ENCODE measurements at regions of chr22 and their contacts with region 1.

Region 1: GRCh38 chr22:39773976-39774539 is 119.5 kb downstream of the ENTHD1 start:
- DNase-seq: peak in 8 of 9 donors; percentile 16 to 51 (median 40)
- ATAC-seq: peak; percentile 88
- H3K4me3 ChIP-seq: no peak overlapping the region
- H3K4me3 Mint-ChIP-seq: peak overlapping the region; percentile 3 to 75 (median 62)
- H3K27ac ChIP-seq: no peak overlapping the region
- H3K27ac Mint-ChIP-seq: peak overlapping the region; percentile 51 to 83 (median 80)
- H3K4me1 ChIP-seq: peaks cover 7 to 24% of the 10 kb centered on the region in 2 donors
- H3K4me1 Mint-ChIP-seq: peaks cover 22 to 60% (median 55%) of the 10 kb centered on the region in 7 donors
- H3K27me3 ChIP-seq: no peaks in the 10 kb centered on the region
- H3K27me3 Mint-ChIP-seq: no peaks in the 10 kb centered on the region

Region 2: GRCh38 chr22:39808081-39808480 is 34.0 kb after region 1 on chr22:
- CTCF ChIA-PET with region 1: no interaction called
- POLR2A ChIA-PET with region 1: no interaction called
- intact Hi-C with region 1: loop called in 1 of 2 experiments (anchors 5 kb)
- DNase-seq: no peak
- ATAC-seq: no peak
- H3K4me3 ChIP-seq: no peak overlapping the region
- H3K4me3 Mint-ChIP-seq: no peak overlapping the region
- H3K27ac ChIP-seq: no peak overlapping the region
- H3K27ac Mint-ChIP-seq: no peak overlapping the region
- H3K4me1 ChIP-seq: peaks cover 0 to 4% of the 10 kb centered on the region in 2 donors
- H3K4me1 Mint-ChIP-seq: peaks cover 22 to 32% (median 27%) of the 10 kb centered on the region in 7 donors
- H3K27me3 ChIP-seq: no peaks in the 10 kb centered on the region
- H3K27me3 Mint-ChIP-seq: peaks cover 0 to 17% (median 4%) of the 10 kb centered on the region in 5 donors